MCF 10A (cell line): ENCODE measurements at regions of chr12 and their contacts with region 1.

Region 1: DNA sequence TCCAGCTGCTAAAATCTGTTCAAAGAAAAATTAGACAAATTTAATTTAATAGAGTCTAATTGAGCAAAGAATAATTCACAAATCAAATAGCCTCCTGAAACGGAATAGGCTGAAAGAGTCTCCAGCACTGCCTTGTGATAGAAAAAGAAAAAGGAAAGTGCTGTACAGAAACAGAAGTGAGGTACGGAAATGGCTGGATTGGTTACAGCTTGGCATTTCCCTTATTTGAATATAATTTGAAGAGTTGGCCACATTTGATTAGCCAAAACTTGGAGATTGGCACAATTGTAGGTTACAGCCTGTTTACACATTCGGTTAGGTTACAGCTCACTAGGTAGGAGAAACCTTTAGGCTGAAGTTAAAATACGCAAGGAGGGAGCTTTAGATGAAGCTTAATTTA is 24.8 kb upstream of the PCED1B start:
- DNase-seq: no peak
- H3K4me3 Mint-ChIP-seq: no peak overlapping the region
- H3K27ac Mint-ChIP-seq: no peak overlapping the region
- H3K4me1 Mint-ChIP-seq: no peaks in the 10 kb centered on the region
- H3K27me3 Mint-ChIP-seq: no peaks in the 10 kb centered on the region
- CTCF ChIP-seq: no peak

Region 2: GRCh38 chr12:47071241-47071852 is 16.7 kb after region 1 on chr12:
- CTCF ChIA-PET with region 1: interaction called, 19 read pairs
- POLR2A ChIA-PET with region 1: interaction called, 3 read pairs
- intact Hi-C with region 1: no loop called
- DNase-seq: peak; percentile 44
- H3K4me3 Mint-ChIP-seq: no peak overlapping the region
- H3K27ac Mint-ChIP-seq: no peak overlapping the region
- H3K4me1 Mint-ChIP-seq: peaks cover 18% of the 10 kb centered on the region
- H3K27me3 Mint-ChIP-seq: no peaks in the 10 kb centered on the region
- CTCF ChIP-seq: peak; percentile 29

Region 3: GRCh38 chr12:47586952-47587669 is 532.5 kb after region 1 on chr12:
- CTCF ChIA-PET with region 1: no interaction called
- POLR2A ChIA-PET with region 1: no interaction called
- intact Hi-C with region 1: no loop called
- DNase-seq: no peak
- H3K4me3 Mint-ChIP-seq: no peak overlapping the region
- H3K27ac Mint-ChIP-seq: no peak overlapping the region
- H3K4me1 Mint-ChIP-seq: no peaks in the 10 kb centered on the region
- H3K27me3 Mint-ChIP-seq: peaks cover 24% of the 10 kb centered on the region
- CTCF ChIP-seq: no peak